CD4-positive, alpha-beta memory T cell (primary cell): ENCODE measurements at regions of chr11 and their contacts with region 1.

Region 1: GRCh38 chr11:9314291-9315036 is at the start of gene TMEM41B:
- DNase-seq: peak; percentile 98 to 99 (median 99)
- H3K4me3 ChIP-seq: peak within 1 kb of the TSS; percentile 48 to 82
- H3K4me3 Mint-ChIP-seq: peak within 1 kb of the TSS; percentile 93 to 100 (median 97)
- H3K27ac ChIP-seq: peak within 1 kb of the TSS; percentile 61
- H3K27ac Mint-ChIP-seq: peak within 1 kb of the TSS; percentile 95 to 99 (median 97)
- H3K4me1 ChIP-seq: peaks cover 34% of the 10 kb centered on the region
- H3K4me1 Mint-ChIP-seq: peaks cover 27 to 48% (median 37%) of the 10 kb centered on the region in 4 donors
- H3K27me3 ChIP-seq: no peaks in the 10 kb centered on the region
- H3K27me3 Mint-ChIP-seq: peaks cover 3 to 10% of the 10 kb centered on the region in 2 donors
- total RNA-seq, gene TMEM41B: 53.3 to 54.7 TPM

Region 2: DNA sequence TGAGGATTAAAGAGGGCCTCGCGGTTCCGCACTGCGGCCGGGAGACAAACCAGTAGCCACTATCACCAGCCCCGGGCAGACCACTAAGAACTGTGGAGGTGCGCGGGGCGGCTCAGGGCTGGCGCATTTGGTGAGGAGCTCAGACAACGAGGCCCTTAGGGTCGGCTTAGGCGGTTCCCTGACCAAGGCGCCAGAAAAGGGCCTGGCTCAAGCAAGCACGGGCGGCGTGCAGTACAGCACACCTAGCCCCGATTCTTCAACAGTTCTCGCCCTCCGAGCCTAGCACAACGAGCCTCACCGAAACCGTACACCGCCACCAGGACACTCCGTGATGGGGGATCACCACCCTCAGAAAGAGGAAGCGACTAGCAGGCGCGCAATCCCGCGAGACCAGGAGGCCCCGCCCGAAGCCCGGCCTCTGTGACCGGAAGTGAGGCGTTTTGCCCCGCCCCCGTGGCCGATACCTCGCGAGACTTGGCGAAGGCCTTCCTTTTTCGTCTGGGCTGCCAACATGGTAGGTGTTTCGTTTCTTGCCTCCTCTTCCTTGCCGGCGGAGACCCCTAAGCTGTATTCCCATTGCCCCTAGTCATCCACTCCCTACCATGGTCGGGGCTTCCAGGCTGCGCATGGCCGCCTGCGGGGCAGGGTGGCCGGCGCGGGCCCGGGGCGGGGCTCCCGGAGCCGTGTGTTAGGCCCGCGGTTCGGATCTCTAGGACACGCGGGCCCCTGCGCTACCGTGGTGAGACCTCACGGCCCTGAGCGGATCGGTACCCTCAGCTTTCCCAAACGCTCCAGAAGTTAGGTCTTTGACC is 632.0 kb before region 1 on chr11 and contains the starts of genes RPL27A and TRIM66:
- CTCF ChIA-PET with region 1: no interaction called
- POLR2A ChIA-PET with region 1: interaction called, 10 read pairs
- intact Hi-C with region 1: no loop called
- DNase-seq: peak; percentile 98 to 99 (median 98)
- H3K4me3 ChIP-seq: peak within 1 kb of the TSS; percentile 61 to 87
- H3K4me3 Mint-ChIP-seq: peak within 1 kb of the TSS; percentile 89 to 99 (median 96)
- H3K27ac ChIP-seq: peak within 1 kb of the TSS; percentile 96
- H3K27ac Mint-ChIP-seq: peak within 1 kb of the TSS; percentile 97 to 99 (median 98)
- H3K4me1 ChIP-seq: peaks cover 34% of the 10 kb centered on the region
- H3K4me1 Mint-ChIP-seq: peaks cover 28 to 72% (median 40%) of the 10 kb centered on the region in 4 donors
- H3K27me3 ChIP-seq: no peaks in the 10 kb centered on the region
- H3K27me3 Mint-ChIP-seq: no peaks in the 10 kb centered on the region
- total RNA-seq, gene RPL27A: 1,456 to 1,504 TPM
- total RNA-seq, gene TRIM66: 25.0 to 31.3 TPM

Region 3: DNA sequence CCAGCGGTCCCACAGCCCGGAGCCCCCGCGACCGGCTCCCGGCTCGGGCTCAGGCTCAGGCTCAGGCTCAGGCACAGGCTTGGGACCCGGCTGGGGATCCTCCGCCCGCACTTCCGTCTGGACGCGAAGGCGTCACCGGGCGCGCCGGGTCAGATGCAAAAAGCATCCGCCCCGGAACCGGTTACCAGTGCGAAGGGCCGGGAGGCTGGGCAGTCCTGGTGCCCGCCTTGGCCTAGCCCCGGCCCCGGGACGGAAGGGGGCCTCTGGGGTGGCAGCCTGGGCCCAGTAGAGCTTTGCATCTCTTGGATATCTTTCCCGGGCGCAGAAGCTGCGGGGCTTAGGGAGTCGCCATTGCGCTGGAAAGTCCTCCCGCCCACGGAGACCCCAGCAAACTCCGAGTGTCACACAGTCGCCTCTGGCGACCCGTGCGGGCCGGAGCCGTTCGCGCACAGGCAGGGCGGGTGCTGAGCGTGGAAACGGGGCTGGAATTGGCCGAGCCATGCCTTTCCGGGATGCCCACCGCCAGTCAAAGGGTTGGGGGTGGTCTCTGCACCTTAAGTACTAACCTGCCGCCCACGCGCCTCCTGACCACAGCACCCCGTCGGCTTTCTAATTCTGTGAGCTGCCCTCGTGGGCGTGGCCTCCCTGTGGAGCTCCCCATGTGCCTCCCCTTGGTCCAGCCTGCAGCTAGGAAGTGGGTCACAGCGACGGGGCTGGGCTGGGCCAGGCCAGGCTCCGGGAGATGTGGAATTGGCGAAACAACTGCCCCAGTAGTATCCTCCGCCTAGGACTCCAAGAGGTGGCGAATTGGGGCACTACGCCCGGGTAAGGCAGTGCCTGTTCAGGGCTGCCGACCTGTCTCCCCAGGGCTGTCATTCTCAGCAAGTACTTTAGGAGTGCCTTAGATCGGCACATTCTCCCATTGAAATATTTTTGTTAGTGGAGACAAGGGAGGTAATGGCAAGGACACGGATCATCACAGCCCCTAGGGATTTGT is 349.8 kb before region 1 on chr11 and contains the start of gene TMEM9B:
- CTCF ChIA-PET with region 1: no interaction called
- POLR2A ChIA-PET with region 1: interaction called, 6 read pairs
- intact Hi-C with region 1: loop called (anchors 5 kb)
- DNase-seq: peak; percentile 72 to 83 (median 76)
- H3K4me3 ChIP-seq: peak within 1 kb of the TSS; percentile 89 to 91
- H3K4me3 Mint-ChIP-seq: peak within 1 kb of the TSS; percentile 93 to 98 (median 97)
- H3K27ac ChIP-seq: peak within 1 kb of the TSS; percentile 90
- H3K27ac Mint-ChIP-seq: peak within 1 kb of the TSS; percentile 91 to 99 (median 98)
- H3K4me1 ChIP-seq: peaks cover 26% of the 10 kb centered on the region
- H3K4me1 Mint-ChIP-seq: peaks cover 20 to 41% (median 30%) of the 10 kb centered on the region in 4 donors
- H3K27me3 ChIP-seq: no peaks in the 10 kb centered on the region
- H3K27me3 Mint-ChIP-seq: no peaks in the 10 kb centered on the region
- total RNA-seq, gene TMEM9B: 36.8 to 38.9 TPM

Region 4: DNA sequence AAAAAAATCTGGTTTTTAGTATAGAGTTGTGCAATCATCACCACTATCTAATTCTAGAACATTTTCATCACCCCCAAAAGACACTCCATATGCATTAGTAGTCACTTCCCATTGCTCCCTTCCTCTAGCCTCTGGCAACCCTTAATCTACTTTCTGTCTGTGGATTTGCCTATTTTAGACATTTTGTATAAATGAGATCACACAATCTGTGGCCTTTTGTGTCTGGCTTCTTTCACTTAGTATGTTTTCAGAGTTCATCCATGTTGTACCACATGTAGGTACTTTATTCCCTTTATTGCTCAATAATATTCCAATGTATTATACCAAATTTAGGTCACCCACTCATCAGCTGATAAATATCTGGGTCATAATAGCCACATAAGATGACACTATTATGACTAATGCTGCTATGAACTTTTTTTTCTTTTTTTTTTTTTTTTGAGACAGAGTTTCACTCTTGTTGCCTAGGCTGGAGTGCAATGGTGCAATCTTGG is 155.5 kb before region 1 on chr11:
- CTCF ChIA-PET with region 1: no interaction called
- POLR2A ChIA-PET with region 1: no interaction called
- intact Hi-C with region 1: no loop called
- DNase-seq: no peak
- H3K4me3 ChIP-seq: no peak overlapping the region
- H3K4me3 Mint-ChIP-seq: no peak overlapping the region
- H3K27ac ChIP-seq: no peak overlapping the region
- H3K27ac Mint-ChIP-seq: peak overlapping the region in 3 of 7 donors; percentile 6 to 43 (median 33)
- H3K4me1 ChIP-seq: no peaks in the 10 kb centered on the region
- H3K4me1 Mint-ChIP-seq: peaks cover 1 to 13% (median 9%) of the 10 kb centered on the region in 4 donors
- H3K27me3 ChIP-seq: no peaks in the 10 kb centered on the region
- H3K27me3 Mint-ChIP-seq: no peaks in the 10 kb centered on the region

Region 5: GRCh38 chr11:9225748-9226298 is 88.6 kb before region 1 on chr11:
- CTCF ChIA-PET with region 1: no interaction called
- POLR2A ChIA-PET with region 1: no interaction called
- intact Hi-C with region 1: no loop called
- DNase-seq: no peak
- H3K4me3 ChIP-seq: no peak overlapping the region
- H3K4me3 Mint-ChIP-seq: no peak overlapping the region
- H3K27ac ChIP-seq: no peak overlapping the region
- H3K27ac Mint-ChIP-seq: no peak overlapping the region
- H3K4me1 ChIP-seq: peaks cover 11% of the 10 kb centered on the region
- H3K4me1 Mint-ChIP-seq: peaks cover 16 to 23% (median 19%) of the 10 kb centered on the region in 4 donors
- H3K27me3 ChIP-seq: no peaks in the 10 kb centered on the region
- H3K27me3 Mint-ChIP-seq: no peaks in the 10 kb centered on the region

Region 6: GRCh38 chr11:9250139-9250582 is 64.3 kb before region 1 on chr11:
- CTCF ChIA-PET with region 1: interaction called, 3 read pairs
- POLR2A ChIA-PET with region 1: interaction called, 13 read pairs
- intact Hi-C with region 1: loop called (anchors 1 kb)
- DNase-seq: peak; percentile 50 to 65 (median 59)
- H3K4me3 ChIP-seq: no peak overlapping the region
- H3K4me3 Mint-ChIP-seq: peak overlapping the region; percentile 44 to 80 (median 66)
- H3K27ac ChIP-seq: peak overlapping the region; percentile 35
- H3K27ac Mint-ChIP-seq: peak overlapping the region; percentile 49 to 90 (median 84)
- H3K4me1 ChIP-seq: peaks cover 79% of the 10 kb centered on the region
- H3K4me1 Mint-ChIP-seq: peaks cover 35 to 79% (median 55%) of the 10 kb centered on the region in 4 donors
- H3K27me3 ChIP-seq: no peaks in the 10 kb centered on the region
- H3K27me3 Mint-ChIP-seq: no peaks in the 10 kb centered on the region

Region 7: GRCh38 chr11:9280655-9281301 is 33.7 kb before region 1 on chr11:
- CTCF ChIA-PET with region 1: interaction called, 3 read pairs
- POLR2A ChIA-PET with region 1: interaction called, 14 read pairs
- intact Hi-C with region 1: no loop called
- DNase-seq: peak; percentile 61 to 73 (median 68)
- H3K4me3 ChIP-seq: no peak overlapping the region
- H3K4me3 Mint-ChIP-seq: peak overlapping the region; percentile 43 to 72 (median 58)
- H3K27ac ChIP-seq: no peak overlapping the region
- H3K27ac Mint-ChIP-seq: peak overlapping the region; percentile 3 to 63 (median 36)
- H3K4me1 ChIP-seq: peaks cover 17% of the 10 kb centered on the region
- H3K4me1 Mint-ChIP-seq: peaks cover 9 to 19% (median 14%) of the 10 kb centered on the region in 4 donors
- H3K27me3 ChIP-seq: no peaks in the 10 kb centered on the region
- H3K27me3 Mint-ChIP-seq: no peaks in the 10 kb centered on the region

Region 8: DNA sequence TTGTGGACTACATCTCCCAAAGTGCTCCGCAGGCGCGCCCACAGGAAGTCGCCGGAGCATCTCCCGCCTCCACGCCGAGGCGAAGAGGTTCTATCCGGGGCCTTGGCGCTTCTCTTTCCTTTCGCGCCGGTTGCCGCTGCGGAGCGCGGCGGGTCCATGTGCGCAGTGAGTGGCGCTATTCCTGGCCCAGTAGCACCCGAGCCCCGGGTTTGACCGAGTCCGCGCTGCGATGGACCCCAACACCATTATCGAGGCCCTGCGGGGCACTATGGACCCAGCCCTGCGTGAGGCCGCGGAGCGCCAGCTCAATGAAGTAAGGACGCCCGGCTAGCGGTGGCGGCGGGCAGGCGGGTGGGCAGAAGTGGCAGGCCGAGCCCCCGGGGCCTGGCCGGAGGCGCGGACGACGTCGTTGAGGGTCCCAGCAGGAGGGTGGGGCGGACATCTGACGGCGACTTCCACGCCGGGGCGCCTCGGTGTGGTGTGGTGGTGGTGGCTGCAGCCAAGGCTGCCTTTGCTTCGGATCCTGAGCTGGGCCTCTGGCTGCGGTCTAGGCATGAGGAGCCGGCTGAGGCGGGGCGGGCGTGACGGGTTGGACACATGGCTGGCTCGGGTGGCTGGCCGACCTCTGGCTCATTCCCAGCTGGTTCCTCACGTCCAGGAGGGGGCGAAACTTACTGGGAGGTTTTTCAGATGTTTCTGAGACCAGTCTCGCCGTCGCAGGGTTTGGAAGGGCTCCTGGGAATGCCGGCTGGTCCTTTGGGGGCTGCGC is 70.3 kb after region 1 on chr11 and contains the start of gene IPO7:
- CTCF ChIA-PET with region 1: interaction called, 8 read pairs
- POLR2A ChIA-PET with region 1: interaction called, 45 read pairs
- intact Hi-C with region 1: loop called (anchors 1 kb)
- DNase-seq: peak; percentile 84 to 89 (median 86)
- H3K4me3 ChIP-seq: peak within 1 kb of the TSS; percentile 92 to 97
- H3K4me3 Mint-ChIP-seq: peak within 1 kb of the TSS; percentile 92 to 98 (median 94)
- H3K27ac ChIP-seq: peak within 1 kb of the TSS; percentile 86
- H3K27ac Mint-ChIP-seq: peak within 1 kb of the TSS; percentile 92 to 96 (median 94)
- H3K4me1 ChIP-seq: peaks cover 29% of the 10 kb centered on the region
- H3K4me1 Mint-ChIP-seq: peaks cover 23 to 43% (median 34%) of the 10 kb centered on the region in 4 donors
- H3K27me3 ChIP-seq: no peaks in the 10 kb centered on the region
- H3K27me3 Mint-ChIP-seq: no peaks in the 10 kb centered on the region
- total RNA-seq, gene IPO7: 63.4 to 67.0 TPM